Colonic mucosa (tissue), 4 donors: ENCODE measurements at regions of chr14 and their contacts with region 1.

Region 1: GRCh38 chr14:77654001-77654441 is 37.6 kb upstream of the SPTLC2 start:
- DNase-seq: no peak
- H3K4me3 ChIP-seq: no peak overlapping the region
- H3K27ac ChIP-seq: no peak overlapping the region
- H3K4me1 ChIP-seq: no peaks in the 10 kb centered on the region
- H3K27me3 ChIP-seq: no peaks in the 10 kb centered on the region
- CTCF ChIP-seq: no peak

Region 2: GRCh38 chr14:77707724-77708408 is 53.8 kb after region 1 on chr14 and contains the starts of genes ALKBH1 and SLIRP:
- intact Hi-C with region 1: loop called (anchors 2 kb)
- DNase-seq: peak; percentile 93
- H3K4me3 ChIP-seq: peak within 1 kb of the TSS; percentile 98
- H3K27ac ChIP-seq: peak within 1 kb of the TSS; percentile 41
- H3K4me1 ChIP-seq: peaks cover 17% of the 10 kb centered on the region
- H3K27me3 ChIP-seq: no peaks in the 10 kb centered on the region
- CTCF ChIP-seq: no peak
- total RNA-seq, gene ALKBH1: 11.5 to 13.3 TPM
- total RNA-seq, gene SLIRP: 107 to 194 TPM

Region 3: GRCh38 chr14:77812028-77812427 is 158.0 kb after region 1 on chr14:
- intact Hi-C with region 1: loop called (anchors 10 kb)
- DNase-seq: no peak
- H3K4me3 ChIP-seq: no peak overlapping the region
- H3K27ac ChIP-seq: no peak overlapping the region
- H3K4me1 ChIP-seq: no peaks in the 10 kb centered on the region
- H3K27me3 ChIP-seq: no peaks in the 10 kb centered on the region
- CTCF ChIP-seq: no peak